ENCODE measurements at regions of chr16 and their contacts with region 1.

Region 1: DNA sequence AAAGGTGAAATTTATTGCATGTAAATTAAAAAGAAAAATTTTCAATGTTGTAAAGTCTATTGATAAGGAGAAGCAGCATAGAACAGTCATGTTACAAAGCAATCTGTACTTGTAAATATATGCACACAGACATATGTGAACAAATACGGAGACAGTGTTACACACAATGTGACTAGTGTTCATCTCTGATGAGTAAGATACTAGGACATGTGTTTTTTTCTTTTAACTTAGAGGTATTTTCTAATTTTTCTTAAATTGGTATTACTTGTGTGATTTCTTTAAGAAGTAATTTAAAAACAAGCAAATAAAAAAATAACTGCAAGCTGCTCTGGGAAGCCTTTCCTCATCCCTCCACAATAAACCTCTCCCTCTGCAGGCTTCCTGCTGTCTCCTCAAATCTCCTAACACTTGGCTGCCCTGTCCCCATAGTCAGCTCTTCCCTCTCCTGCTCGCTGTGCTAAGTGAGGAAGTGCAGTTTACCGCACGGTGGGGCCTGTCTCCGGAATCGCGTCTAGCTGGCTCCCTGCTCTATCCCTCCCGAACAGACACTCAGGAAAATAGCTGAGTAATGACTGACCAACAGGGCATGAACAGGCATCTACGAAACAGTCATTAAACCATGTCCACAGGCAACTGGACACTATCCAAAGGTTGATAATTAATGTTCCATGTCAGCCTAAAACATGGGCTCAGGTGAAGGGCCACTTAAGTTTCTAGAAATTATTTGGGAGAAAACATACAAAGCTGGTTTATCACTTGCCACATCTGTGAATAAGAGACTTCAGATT is 35.9 kb downstream of the CMTM4 start:
- DNase-seq: peak; percentile 90
- H3K4me3 ChIP-seq: no peak overlapping the region
- H3K27ac ChIP-seq: peak overlapping the region; percentile 49
- H3K4me1 ChIP-seq: peaks cover 25% of the 10 kb centered on the region
- H3K27me3 ChIP-seq: no peaks in the 10 kb centered on the region
- CTCF ChIP-seq: peak in 1 of 2 donors; percentile 25
- POLR2A ChIP-seq: no peak

Region 2: DNA sequence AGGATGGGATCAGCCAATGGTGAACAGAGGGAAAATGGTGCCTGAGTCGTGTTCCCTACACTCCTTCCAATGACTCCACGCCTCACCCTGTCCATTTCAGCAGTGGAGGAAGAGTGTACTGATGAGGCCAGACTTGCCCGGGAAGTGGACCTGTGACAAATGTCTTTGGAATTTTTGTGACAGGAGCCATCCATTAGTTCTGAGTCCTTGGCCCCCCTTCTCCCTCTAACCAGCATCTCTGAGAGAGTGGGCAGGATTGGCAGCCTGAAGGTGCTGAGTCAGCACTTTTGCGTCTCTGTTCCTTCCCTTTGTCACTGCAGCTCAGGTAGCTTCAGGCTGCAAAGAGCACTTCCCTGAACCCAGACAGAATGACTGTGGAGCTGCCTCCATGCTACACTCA is 202.7 kb before region 1 on chr16:
- CTCF ChIA-PET with region 1: no interaction called
- POLR2A ChIA-PET with region 1: no interaction called
- dilution Hi-C with region 1: no loop called
- intact Hi-C with region 1: no loop called
- DNase-seq: no peak
- H3K4me3 ChIP-seq: no peak overlapping the region
- H3K27ac ChIP-seq: no peak overlapping the region
- H3K4me1 ChIP-seq: no peaks in the 10 kb centered on the region
- H3K27me3 ChIP-seq: peaks cover 8 to 19% of the 10 kb centered on the region in 2 experiments
- CTCF ChIP-seq: no peak
- POLR2A ChIP-seq: no peak

Region 3: GRCh38 chr16:66677179-66677578 is 16.6 kb after region 1 on chr16:
- CTCF ChIA-PET with region 1: interaction called, 11 read pairs
- POLR2A ChIA-PET with region 1: no interaction called
- dilution Hi-C with region 1: no loop called
- intact Hi-C with region 1: no loop called
- DNase-seq: no peak
- H3K4me3 ChIP-seq: no peak overlapping the region
- H3K27ac ChIP-seq: no peak overlapping the region
- H3K4me1 ChIP-seq: no peaks in the 10 kb centered on the region
- H3K27me3 ChIP-seq: no peaks in the 10 kb centered on the region
- CTCF ChIP-seq: no peak
- POLR2A ChIP-seq: no peak

Region 4: GRCh38 chr16:66696669-66697630 is 36.3 kb after region 1 on chr16 and contains the start of gene CMTM4:
- CTCF ChIA-PET with region 1: interaction called, 49 read pairs
- POLR2A ChIA-PET with region 1: no interaction called
- dilution Hi-C with region 1: no loop called
- intact Hi-C with region 1: loop called (anchors 2 kb)
- DNase-seq: peak; percentile 86
- H3K4me3 ChIP-seq: peak within 1 kb of the TSS; percentile 40 to 60 (median 53)
- H3K27ac ChIP-seq: no peak within 1 kb of the TSS
- H3K4me1 ChIP-seq: peaks cover 8% of the 10 kb centered on the region
- H3K27me3 ChIP-seq: peaks cover 2% of the 10 kb centered on the region in 2 experiments
- CTCF ChIP-seq: peak; percentile 4 to 8
- POLR2A ChIP-seq: peak; percentile 34
- total RNA-seq, gene CMTM4: 8.5 and 9.0 TPM in 2 replicates